Ascending aorta (tissue), 2 donors: ENCODE measurements at regions of chr6 and their contacts with region 1.

Region 1: GRCh38 chr6:148342357-148343046 is at the start of gene SASH1:
- DNase-seq: peak; percentile 25 to 82
- H3K4me3 ChIP-seq: peak within 1 kb of the TSS; percentile 91 to 96
- H3K27ac ChIP-seq: peak within 1 kb of the TSS; percentile 90 to 91
- H3K4me1 ChIP-seq: peaks cover 0 to 33% of the 10 kb centered on the region in 2 donors
- H3K27me3 ChIP-seq: no peaks in the 10 kb centered on the region
- CTCF ChIP-seq: peak in 1 of 3 experiments; percentile 3
- total RNA-seq, gene SASH1: 70.2 TPM

Region 2: DNA sequence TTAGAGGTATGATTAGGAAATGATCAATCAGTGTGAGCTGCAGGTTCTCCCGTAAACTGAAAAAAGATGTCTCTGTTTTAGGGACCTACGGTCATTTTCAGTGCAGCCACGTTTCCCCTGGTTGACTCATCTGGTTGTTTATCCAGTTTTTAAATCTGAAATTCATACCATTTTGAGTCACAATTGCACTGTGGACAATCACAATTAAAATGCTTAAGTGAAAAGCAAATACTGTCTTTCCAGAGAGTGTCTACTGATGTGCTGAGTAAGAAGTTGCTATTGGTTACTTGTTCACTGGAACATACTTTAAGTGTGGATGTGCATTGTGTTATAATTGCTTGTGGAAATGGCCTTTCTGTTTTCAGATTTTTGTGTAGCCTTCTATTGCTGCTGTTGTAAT is 305.0 kb before region 1 on chr6:
- intact Hi-C with region 1: no loop called
- DNase-seq: no peak
- H3K4me3 ChIP-seq: no peak overlapping the region
- H3K27ac ChIP-seq: no peak overlapping the region
- H3K4me1 ChIP-seq: no peaks in the 10 kb centered on the region
- H3K27me3 ChIP-seq: no peaks in the 10 kb centered on the region
- CTCF ChIP-seq: no peak

Region 3: DNA sequence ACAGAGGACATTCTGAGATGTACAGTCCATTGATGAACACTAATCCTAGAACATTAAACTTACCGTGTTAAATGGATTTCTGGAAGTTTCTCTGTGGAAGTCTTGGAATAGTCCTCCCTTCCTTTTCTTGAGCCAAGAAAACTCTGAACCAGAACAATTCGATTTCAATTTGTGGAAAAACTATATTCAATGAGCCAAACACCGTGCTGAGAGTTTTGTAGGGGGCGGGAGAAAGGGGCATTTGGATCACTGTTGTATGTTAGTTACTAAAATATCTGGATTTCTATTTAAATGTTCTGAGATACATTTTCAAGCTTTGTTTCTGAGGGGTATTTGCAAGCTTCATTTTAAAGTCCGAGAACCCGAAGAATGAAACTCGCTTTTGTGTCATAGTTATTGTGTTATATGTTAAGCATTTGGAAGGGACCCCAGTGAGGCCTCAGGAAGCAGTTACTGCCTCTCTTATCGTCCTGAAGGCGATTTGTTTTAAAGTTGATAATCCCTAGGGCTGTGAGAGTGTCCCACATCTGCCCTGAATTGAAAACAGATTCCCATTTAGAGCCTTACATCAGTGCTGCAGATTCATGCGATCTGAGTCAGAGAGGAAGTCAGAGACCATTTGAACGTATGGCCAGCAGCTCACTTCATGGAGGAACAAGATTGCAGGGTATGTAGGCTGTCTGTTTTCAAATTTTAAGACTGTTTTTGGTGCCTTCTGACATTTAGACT is 70.6 kb before region 1 on chr6:
- intact Hi-C with region 1: loop called (anchors 5 kb)
- DNase-seq: no peak
- H3K4me3 ChIP-seq: peak overlapping the region; percentile 31
- H3K27ac ChIP-seq: peak overlapping the region; percentile 22 to 65
- H3K4me1 ChIP-seq: peaks cover 0 to 15% of the 10 kb centered on the region in 2 donors
- H3K27me3 ChIP-seq: no peaks in the 10 kb centered on the region
- CTCF ChIP-seq: no peak

Region 4: DNA sequence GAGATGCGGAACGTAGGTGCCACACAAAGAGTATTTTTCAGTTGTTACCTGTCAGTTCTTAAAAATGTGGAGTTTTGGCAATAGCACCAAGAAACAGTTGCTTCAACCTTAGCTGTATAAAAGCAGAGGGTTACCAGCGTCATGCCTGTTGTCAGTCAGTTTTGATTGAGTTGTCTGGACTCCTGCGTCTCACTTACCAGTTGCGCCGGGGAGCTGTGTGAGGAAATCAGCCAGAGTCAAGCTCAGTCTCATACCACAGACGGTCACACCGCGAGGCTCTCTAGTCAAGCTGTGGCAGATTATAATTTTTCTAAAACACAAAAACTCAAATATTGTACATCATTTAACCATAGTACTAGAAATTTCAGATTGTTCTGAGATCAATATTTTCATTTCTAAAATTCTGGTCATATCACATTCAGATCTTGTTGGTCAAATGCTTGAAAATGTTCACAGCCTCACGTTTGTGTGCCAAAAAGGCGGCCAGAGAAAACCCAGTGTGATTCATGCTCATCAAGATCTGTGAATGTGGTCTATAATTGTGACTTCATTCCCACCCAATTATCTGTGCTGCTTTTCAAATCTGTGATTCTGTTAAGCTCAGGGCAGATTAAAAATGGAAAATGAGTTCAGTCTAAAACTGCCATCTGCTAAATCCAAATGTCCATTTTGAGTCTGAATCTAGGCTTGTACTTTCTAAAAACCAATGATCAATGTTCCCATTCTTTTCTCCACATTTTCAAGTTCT is 37.6 kb after region 1 on chr6:
- intact Hi-C with region 1: loop called (anchors 5 kb)
- DNase-seq: no peak
- H3K4me3 ChIP-seq: no peak overlapping the region
- H3K27ac ChIP-seq: peak overlapping the region; percentile 11 to 57
- H3K4me1 ChIP-seq: peaks cover 0 to 16% of the 10 kb centered on the region in 2 donors
- H3K27me3 ChIP-seq: no peaks in the 10 kb centered on the region
- CTCF ChIP-seq: no peak

Region 5: GRCh38 chr6:148407372-148407771 is 64.9 kb after region 1 on chr6:
- intact Hi-C with region 1: loop called (anchors 5 kb)
- DNase-seq: no peak
- H3K4me3 ChIP-seq: no peak overlapping the region
- H3K27ac ChIP-seq: peak overlapping the region; percentile 78 to 94
- H3K4me1 ChIP-seq: peaks cover 5 to 24% of the 10 kb centered on the region in 2 donors
- H3K27me3 ChIP-seq: no peaks in the 10 kb centered on the region
- CTCF ChIP-seq: no peak

Region 6: GRCh38 chr6:148464319-148465010 is 122.0 kb after region 1 on chr6:
- intact Hi-C with region 1: loop called (anchors 5 kb)
- DNase-seq: peak in 1 of 2 donors; percentile 87
- H3K4me3 ChIP-seq: no peak overlapping the region
- H3K27ac ChIP-seq: peak overlapping the region in 1 of 2 donors; percentile 38
- H3K4me1 ChIP-seq: peaks cover 14 to 24% of the 10 kb centered on the region in 2 donors
- H3K27me3 ChIP-seq: no peaks in the 10 kb centered on the region
- CTCF ChIP-seq: peak; percentile 78 to 96 (median 92)

Region 7: GRCh38 chr6:148524976-148525375 is 182.5 kb after region 1 on chr6:
- intact Hi-C with region 1: loop called (anchors 1 kb)
- DNase-seq: peak in 1 of 2 donors; percentile 77
- H3K4me3 ChIP-seq: peak overlapping the region; percentile 24 to 57
- H3K27ac ChIP-seq: peak overlapping the region; percentile 82 to 85
- H3K4me1 ChIP-seq: peaks cover 0 to 44% of the 10 kb centered on the region in 2 donors
- H3K27me3 ChIP-seq: no peaks in the 10 kb centered on the region
- CTCF ChIP-seq: no peak